ENCODE measurements at regions of chr19 and their contacts with region 1.

Region 1: DNA sequence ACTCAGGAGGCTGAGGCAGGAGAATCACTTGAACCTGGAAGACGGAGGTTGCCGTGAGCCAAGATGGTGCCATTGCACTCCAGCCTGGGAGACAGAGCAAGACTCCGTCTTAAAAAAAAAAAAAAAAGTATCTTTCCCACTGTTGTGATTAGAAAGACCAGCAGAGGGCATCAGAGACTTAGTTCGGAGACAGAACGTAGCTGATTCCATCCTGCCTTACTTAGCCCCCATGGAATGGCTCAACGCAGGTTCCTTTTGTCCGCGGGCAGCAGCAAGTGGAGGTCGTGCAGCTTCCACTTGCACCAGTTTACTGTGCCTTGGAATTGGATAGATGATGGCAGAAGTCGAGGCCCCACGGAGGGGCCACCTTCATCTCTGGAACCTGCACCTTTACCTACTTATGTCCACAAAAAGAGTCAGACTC is 8.1 kb downstream of the TIMM29 start:
- DNase-seq: peak; percentile 46
- H3K4me3 Mint-ChIP-seq: no peak overlapping the region
- H3K27ac Mint-ChIP-seq: no peak overlapping the region
- H3K4me1 Mint-ChIP-seq: peaks cover 6% of the 10 kb centered on the region
- H3K27me3 Mint-ChIP-seq: no peaks in the 10 kb centered on the region

Region 2: GRCh38 chr19:10717356-10718204 is 219.1 kb before region 1 on chr19 and contains the start of gene DNM2:
- CTCF ChIA-PET with region 1: no interaction called
- intact Hi-C with region 1: no loop called
- DNase-seq: peak; percentile 99
- H3K4me3 Mint-ChIP-seq: peak within 1 kb of the TSS; percentile 96
- H3K27ac Mint-ChIP-seq: peak within 1 kb of the TSS; percentile 84
- H3K4me1 Mint-ChIP-seq: peaks cover 31% of the 10 kb centered on the region
- H3K27me3 Mint-ChIP-seq: no peaks in the 10 kb centered on the region
- total RNA-seq, gene DNM2: 144 to 148 TPM

Region 3: DNA sequence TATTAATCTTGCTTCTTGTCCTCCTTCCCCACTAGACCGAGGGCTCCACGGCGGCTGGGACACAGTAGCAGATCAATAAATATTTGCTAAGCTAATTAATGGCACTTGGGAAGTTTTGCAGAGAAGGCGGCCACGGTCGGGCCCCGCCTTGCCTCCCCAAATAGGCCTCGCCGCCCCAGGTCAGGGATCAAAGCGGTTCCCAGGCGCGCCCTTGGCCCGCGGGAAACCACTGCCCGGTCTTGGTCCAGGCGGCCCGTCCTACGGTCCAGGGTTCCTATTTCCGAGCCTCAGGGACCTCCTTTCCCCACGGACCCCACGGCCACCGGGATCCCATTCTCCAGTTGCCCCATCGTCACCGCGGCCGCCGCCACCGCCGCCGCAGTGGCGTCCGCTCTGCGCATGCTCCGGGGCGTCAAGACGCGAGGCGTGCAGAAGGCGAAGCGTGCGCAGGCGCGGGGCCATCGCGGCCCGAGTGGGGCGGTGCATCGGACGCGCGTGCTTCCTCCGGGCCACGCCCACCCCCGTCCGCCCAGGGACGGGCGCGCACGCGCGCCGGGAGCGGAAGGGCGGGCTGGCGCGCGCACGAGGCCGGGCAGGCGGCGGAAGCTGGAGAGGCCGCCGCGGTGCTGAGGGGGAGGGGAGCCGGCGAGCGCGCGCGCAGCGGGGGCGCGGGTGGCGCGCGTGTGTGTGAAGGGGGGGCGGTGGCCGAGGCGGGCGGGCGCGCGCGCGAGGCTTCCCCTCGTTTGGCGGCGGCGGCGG is 23.8 kb after region 1 on chr19 and contains the start of gene SMARCA4:
- CTCF ChIA-PET with region 1: interaction called, 14 read pairs
- intact Hi-C with region 1: no loop called
- DNase-seq: peak; percentile 97
- H3K4me3 Mint-ChIP-seq: peak within 1 kb of the TSS; percentile 91
- H3K27ac Mint-ChIP-seq: peak within 1 kb of the TSS; percentile 90
- H3K4me1 Mint-ChIP-seq: peaks cover 37% of the 10 kb centered on the region
- H3K27me3 Mint-ChIP-seq: no peaks in the 10 kb centered on the region
- total RNA-seq, gene SMARCA4: 88.6 to 98.6 TPM

Region 4: DNA sequence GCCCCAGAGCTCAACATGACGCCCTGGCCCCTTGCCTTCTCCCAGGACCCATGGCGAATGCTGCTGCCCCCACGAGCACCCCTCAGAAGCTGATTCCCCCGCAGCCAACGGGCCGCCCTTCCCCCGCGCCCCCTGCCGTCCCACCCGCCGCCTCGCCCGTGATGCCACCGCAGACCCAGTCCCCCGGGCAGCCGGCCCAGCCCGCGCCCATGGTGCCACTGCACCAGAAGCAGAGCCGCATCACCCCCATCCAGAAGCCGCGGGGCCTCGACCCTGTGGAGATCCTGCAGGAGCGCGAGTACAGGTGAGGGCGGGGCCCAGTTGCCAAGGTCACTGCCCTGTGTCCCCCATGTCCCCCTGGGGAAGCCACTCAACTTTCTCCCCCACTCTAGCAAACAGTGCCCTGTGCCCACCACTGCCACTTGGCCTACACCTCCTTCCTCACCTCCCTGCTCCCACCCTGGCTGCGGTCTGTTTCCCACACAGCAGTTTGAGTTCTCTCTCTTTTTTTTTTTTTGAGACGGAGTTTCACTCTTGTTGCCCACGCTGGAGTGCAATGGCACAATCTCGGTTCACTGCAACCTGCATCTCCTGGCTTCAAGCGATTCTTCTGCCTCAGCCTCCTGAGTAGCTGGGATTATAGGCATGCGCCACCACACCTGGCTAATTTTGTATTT is 51.1 kb after region 1 on chr19:
- CTCF ChIA-PET with region 1: interaction called, 11 read pairs
- intact Hi-C with region 1: no loop called
- DNase-seq: no peak
- H3K4me3 Mint-ChIP-seq: no peak overlapping the region
- H3K27ac Mint-ChIP-seq: no peak overlapping the region
- H3K4me1 Mint-ChIP-seq: peaks cover 3% of the 10 kb centered on the region
- H3K27me3 Mint-ChIP-seq: no peaks in the 10 kb centered on the region

Region 5: DNA sequence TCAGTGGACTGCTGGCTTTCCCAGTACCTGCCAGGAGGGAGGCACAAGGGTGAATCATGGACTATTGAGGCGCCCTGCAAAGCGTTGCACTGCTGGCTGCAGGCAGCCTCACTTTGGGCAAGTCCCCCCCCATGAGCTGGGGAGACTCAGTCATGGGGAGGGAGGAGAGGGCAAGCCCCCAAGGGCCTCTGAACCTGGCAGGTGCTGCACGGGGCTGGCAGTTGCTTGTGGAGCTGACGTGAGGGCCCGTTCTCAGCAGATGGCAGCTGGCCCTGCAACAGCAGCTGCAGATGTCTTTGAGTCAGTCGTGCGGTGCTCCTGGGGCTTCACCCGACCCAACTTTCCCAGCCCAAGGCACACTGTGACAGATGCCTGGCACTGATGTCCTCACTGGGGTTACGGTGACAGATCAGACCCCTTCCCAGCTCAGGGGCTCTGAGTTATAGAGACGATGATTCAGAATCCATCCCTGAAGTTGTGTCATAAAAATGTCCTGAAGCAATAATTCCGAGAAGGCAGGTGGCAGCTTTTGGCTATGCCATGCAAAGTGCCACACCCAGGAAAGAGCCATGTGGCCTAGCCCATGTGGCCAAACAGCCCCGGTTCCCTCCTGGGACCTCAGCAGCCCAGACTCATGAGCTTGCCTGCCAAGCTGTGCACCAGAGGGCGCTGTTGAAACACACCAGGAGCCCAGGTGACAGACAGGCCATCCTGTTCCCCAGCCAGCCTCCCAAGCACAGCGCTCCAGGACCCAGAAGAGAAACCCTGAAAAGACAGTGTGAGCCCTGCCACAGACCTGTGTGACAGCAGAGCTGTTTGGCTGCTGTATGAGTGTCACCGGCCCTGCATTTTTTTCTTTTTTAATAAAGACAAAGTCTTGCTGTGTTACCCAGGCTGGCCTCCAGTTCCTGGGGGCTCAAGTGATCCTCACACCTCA is 99.0 kb after region 1 on chr19:
- CTCF ChIA-PET with region 1: interaction called, 16 read pairs
- intact Hi-C with region 1: loop called (anchors 1 kb)
- DNase-seq: peak; percentile 95
- H3K4me3 Mint-ChIP-seq: no peak overlapping the region
- H3K27ac Mint-ChIP-seq: peak overlapping the region; percentile 56
- H3K4me1 Mint-ChIP-seq: peaks cover 8% of the 10 kb centered on the region
- H3K27me3 Mint-ChIP-seq: no peaks in the 10 kb centered on the region

Region 6: DNA sequence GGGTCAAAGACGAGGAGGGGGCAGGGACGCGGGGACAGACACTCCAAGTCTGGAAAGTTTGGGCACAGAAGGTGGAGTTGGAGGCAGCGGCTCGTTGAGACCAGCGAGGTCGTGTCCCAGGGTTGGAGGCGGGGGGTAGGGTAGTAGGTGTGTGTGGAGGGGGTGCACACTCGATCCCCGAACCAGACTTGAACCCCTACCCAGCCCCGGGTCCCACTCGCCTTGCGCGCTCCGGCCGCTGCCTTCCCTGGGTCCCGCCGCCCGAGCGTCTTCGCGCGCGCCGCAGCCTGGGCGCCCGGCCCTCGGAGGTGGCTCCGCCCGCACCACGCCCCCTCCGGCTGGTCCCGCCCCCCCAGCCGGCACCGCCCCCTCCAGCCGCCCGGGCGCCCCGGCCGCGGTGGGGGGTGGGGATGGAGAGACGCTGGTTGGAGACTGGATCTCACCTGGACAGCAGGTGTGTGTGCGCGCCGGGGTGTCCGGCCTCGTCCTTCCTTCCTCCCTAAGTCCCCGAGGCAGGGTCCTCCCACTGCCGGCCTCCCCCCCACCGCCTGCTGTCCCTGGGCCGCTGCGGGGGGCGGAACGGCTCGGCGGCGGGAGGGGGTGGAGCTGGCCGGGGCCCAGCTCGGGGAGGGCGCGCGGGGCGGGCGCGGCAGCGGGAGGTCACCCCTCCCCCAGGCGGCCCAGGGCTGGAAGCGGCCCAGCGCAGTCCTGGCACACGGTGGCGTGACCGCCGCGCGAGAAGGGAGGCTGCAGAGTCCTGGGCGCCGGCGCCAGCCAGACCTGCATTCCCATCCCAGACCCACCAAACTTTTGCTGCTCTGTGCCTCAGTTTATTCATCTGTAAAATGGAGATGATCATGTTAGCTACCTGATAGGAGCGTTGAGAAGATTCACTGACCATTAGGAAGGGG is 260.8 kb after region 1 on chr19 and contains the start of gene KANK2:
- CTCF ChIA-PET with region 1: no interaction called
- intact Hi-C with region 1: loop called (anchors 5 kb)
- DNase-seq: peak; percentile 73
- H3K4me3 Mint-ChIP-seq: peak within 1 kb of the TSS; percentile 66
- H3K27ac Mint-ChIP-seq: no peak within 1 kb of the TSS
- H3K4me1 Mint-ChIP-seq: peaks cover 6% of the 10 kb centered on the region
- H3K27me3 Mint-ChIP-seq: peaks cover 12% of the 10 kb centered on the region
- total RNA-seq, gene KANK2: 1.5 to 2.0 TPM